GM10248 (cell line): ENCODE measurements at regions of chr11 and their contacts with region 1.

Region 1: GRCh38 chr11:10540923-10541560 is at the start of gene RNF141:
- DNase-seq: peak; percentile 98
- CTCF ChIP-seq: peak; percentile 95

Region 2: GRCh38 chr11:10450464-10451425 is 90.3 kb before region 1 on chr11:
- CTCF ChIA-PET with region 1: interaction called, 11 read pairs
- POLR2A ChIA-PET with region 1: no interaction called
- DNase-seq: peak; percentile 56
- CTCF ChIP-seq: peak; percentile 14

Region 3: GRCh38 chr11:10519630-10520029 is 21.4 kb before region 1 on chr11:
- CTCF ChIA-PET with region 1: interaction called, 17 read pairs
- POLR2A ChIA-PET with region 1: no interaction called
- DNase-seq: no peak
- CTCF ChIP-seq: no peak

Region 4: DNA sequence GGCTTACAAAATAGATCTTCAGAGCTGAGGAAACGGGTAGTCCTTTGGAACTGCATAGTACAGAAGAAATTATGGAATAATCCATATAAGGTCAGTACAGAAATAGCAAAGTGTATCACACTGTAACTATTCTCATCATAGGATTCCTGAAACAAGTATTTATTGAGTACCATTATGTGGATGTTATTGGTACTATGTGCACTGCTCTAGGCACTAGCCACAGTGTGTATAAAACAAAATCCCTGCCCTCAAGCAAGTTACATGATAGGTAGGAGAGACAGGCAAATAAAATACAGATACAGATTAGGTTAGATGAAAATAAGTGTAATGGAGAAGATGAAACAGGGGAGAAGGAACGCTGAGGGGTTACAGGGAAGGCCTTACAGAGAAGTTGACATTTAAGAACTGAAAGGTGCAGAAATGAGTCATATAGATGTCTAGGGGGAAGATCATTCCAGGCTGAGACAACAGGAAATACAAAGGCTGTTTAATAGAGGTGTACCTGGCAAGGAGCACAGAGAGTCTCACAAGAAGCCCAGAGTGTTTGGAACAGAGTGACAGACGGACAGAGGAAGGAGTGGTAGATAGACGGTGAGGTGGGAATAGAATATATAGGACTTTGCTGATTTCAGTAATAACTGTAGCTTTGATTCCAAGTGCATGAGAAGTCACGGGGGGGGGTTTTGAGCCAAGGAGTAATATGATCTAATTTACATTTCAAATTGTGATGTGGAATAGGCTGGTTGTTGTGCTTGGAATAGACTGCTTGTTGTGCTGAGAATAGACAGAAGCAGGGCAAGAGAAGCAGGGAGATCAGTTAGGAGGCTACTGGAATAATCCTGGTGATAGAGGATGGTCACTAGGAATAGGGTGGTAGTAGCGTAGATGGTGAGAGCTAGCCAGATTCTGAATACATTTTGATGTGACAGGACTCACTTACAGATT is 13.8 kb before region 1 on chr11:
- CTCF ChIA-PET with region 1: interaction called, 47 read pairs
- POLR2A ChIA-PET with region 1: no interaction called
- DNase-seq: peak; percentile 55
- CTCF ChIP-seq: no peak

Region 5: GRCh38 chr11:10558288-10558687 is 17.2 kb after region 1 on chr11:
- CTCF ChIA-PET with region 1: interaction called, 13 read pairs
- POLR2A ChIA-PET with region 1: no interaction called
- DNase-seq: no peak
- CTCF ChIP-seq: no peak

Region 6: DNA sequence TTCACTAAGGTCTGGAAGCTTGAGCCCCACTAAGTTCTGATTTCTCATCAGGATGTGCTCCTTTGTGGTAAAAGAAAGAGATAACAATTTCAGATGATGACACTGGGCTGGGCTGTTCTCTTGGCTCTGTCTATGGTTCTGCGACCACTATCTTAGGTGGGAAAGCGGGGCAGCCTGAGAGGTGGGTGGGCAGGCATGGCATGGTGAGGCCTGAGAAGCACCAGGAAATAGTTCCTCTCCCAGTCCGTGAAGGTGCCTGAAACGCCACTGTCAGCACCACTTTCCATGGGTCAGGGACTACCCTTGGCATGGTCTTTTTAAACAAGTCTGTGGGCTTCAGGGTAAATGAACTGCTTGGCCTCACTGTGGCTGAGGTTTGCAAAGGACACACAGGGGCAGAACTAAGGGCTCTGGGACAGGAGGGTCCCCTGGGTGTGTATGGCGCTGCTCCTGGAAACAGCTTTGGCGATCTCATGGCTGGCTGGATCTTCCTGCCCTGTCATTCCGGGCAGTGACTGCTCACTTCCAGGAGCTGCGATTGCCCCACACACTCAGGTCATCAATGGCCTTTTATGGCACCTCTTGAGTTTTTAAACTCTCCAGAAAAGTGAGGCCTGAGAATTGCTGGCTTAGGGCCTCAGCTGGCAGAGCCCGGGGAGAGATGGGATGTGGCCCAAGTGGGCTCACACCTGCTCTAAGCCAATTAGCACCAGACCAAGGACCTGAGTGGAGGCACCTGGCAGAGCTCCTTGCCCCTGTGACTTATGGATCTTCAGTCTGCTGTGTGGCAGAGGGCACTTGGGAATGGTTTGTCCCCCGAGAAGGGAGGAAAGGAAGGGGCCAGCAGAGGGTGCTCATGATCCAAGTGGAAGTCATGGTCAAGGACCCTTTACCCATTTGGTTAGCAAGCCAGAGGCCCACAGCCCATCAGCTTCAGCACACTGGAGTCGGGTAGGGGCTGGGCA is 83.0 kb after region 1 on chr11:
- CTCF ChIA-PET with region 1: interaction called, 14 read pairs
- POLR2A ChIA-PET with region 1: no interaction called
- DNase-seq: peak; percentile 67
- CTCF ChIP-seq: peak; percentile 31